Activated CD4-positive, alpha-beta T cell treated with anti-CD3 and anti-CD28 coated beads, Interleukin-2, amount 10 ng/mL, durations not matched to agents 24 days and 14 days (primary cell): ENCODE measurements at regions of chr15 and their contacts with region 1.

Region 1: GRCh38 chr15:69475769-69476358 is 23.2 kb downstream of the RPLP1 start:
- DNase-seq: peak; percentile 92
- H3K4me3 Mint-ChIP-seq: no peak overlapping the region
- H3K27ac Mint-ChIP-seq: no peak overlapping the region
- H3K4me1 Mint-ChIP-seq: peaks cover under 1% of the 10 kb centered on the region
- H3K27me3 Mint-ChIP-seq: peaks cover 26% of the 10 kb centered on the region

Region 2: GRCh38 chr15:69452692-69453521 is 23.0 kb before region 1 on chr15 and contains the start of gene RPLP1:
- intact Hi-C with region 1: no loop called
- DNase-seq: peak; percentile 99
- H3K4me3 Mint-ChIP-seq: peak within 1 kb of the TSS; percentile 99
- H3K27ac Mint-ChIP-seq: peak within 1 kb of the TSS; percentile 100
- H3K4me1 Mint-ChIP-seq: peaks cover 35% of the 10 kb centered on the region
- H3K27me3 Mint-ChIP-seq: no peaks in the 10 kb centered on the region
- total RNA-seq, gene RPLP1: 1,827 and 1,829 TPM in 2 replicates

Region 3: GRCh38 chr15:69576035-69576526 is 100.2 kb after region 1 on chr15:
- intact Hi-C with region 1: loop called (anchors 2 kb)
- DNase-seq: peak; percentile 87
- H3K4me3 Mint-ChIP-seq: no peak overlapping the region
- H3K27ac Mint-ChIP-seq: peak overlapping the region; percentile 30
- H3K4me1 Mint-ChIP-seq: peaks cover 39% of the 10 kb centered on the region
- H3K27me3 Mint-ChIP-seq: peaks cover 9% of the 10 kb centered on the region

Region 4: DNA sequence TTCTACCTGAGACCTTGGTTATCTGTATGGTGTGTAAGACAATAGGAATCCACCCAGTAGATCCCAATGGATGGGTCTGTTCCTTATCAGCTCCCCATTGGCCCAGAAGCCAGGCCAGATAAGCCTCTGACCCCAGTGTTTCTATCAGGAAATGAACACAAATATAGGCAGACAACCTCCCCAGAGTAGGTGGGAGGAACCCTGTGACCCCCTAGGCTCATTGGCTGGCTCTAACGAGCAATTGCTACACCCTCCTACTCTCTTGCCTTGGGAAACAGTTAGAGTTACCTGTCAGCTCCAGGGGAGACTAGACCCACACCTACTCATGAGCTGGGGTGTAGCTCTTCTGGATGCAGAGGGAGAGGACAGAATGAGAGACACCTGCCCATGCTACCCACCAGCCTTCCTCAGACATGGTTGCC is 987.6 kb after region 1 on chr15:
- intact Hi-C with region 1: loop called (anchors 5 kb)
- DNase-seq: no peak
- H3K4me3 Mint-ChIP-seq: no peak overlapping the region
- H3K27ac Mint-ChIP-seq: peak overlapping the region; percentile 22
- H3K4me1 Mint-ChIP-seq: peaks cover 27% of the 10 kb centered on the region
- H3K27me3 Mint-ChIP-seq: peaks cover 75% of the 10 kb centered on the region

Region 5: GRCh38 chr15:70670680-70671079 is 1194.8 kb after region 1 on chr15:
- intact Hi-C with region 1: loop called (anchors 5 kb)
- DNase-seq: no peak
- H3K4me3 Mint-ChIP-seq: no peak overlapping the region
- H3K27ac Mint-ChIP-seq: no peak overlapping the region
- H3K4me1 Mint-ChIP-seq: peaks cover 18% of the 10 kb centered on the region
- H3K27me3 Mint-ChIP-seq: peaks cover 23% of the 10 kb centered on the region

Region 6: DNA sequence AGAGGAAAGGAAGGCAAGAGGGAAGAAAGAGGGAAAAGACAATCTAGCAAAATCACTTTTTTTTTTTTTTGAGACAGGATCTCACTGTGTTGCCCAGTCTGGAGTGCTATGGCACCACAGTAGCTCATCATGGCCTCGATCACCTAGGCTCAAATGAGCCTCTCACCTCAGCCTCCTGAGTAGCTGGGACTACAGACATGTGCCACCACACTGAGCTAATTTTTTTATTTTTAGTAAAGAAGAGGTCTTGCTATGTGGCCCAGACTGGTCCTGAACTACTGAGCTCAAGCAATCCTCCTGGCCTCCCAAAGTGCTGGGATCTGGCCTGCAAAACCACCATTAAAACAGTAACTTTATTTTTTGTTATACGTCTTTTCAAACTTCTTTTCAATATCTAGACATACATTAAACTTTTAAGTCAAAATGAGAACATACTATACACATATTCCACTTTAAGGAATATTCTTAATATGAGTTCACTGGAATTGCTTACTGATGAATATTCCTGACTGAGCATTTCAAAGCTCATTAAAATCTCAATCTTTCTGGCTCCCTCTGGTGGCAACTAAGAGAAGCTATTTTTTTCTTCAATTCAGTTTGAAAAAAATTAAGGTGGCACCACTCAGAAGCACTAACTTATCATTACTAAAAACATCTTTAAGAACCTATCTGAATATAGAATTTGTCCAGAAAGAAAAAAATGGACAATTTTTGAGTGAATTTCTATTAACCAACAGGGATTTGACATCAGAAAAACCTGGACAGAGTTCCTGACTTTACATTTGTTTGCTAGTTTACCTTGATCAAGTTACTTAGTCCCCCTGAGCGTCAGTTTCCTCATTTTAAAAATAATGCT is 1246.6 kb after region 1 on chr15:
- intact Hi-C with region 1: loop called (anchors 10 kb)
- DNase-seq: no peak
- H3K4me3 Mint-ChIP-seq: no peak overlapping the region
- H3K27ac Mint-ChIP-seq: no peak overlapping the region
- H3K4me1 Mint-ChIP-seq: no peaks in the 10 kb centered on the region
- H3K27me3 Mint-ChIP-seq: peaks cover 33% of the 10 kb centered on the region

Region 7: DNA sequence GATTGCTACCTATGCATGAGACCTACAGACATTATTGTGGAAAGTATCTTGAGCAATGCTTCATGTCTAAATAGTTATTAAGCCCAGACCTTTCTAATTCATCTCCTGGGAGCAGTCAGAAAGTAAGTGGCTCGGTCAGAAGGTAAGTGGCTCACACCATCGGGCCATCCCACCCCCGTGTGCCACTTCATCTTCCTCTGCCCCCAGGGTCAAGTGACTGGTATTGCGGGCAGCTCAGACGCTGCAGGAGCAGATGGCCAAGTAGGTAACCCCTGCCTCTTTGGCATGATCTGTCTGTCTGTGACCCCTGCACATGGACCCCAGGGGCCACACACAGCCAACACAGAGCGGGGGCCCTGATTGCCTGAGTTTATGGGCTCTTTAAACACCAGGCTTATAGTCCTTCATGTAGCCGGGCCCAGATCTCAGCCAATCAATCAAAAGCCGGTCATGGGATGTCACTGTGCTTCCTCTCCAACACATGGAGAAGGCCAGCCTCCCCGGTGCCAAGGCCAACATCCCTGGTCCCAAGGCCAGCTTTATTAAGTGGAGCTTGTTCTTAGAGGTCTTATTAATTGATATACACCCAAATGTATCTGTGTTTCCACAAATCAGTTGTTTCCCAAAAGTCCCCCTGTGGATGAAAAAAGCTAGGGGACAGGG is 1335.2 kb after region 1 on chr15:
- intact Hi-C with region 1: loop called (anchors 5 kb)
- DNase-seq: no peak
- H3K4me3 Mint-ChIP-seq: no peak overlapping the region
- H3K27ac Mint-ChIP-seq: no peak overlapping the region
- H3K4me1 Mint-ChIP-seq: peaks cover 2% of the 10 kb centered on the region
- H3K27me3 Mint-ChIP-seq: peaks cover 8% of the 10 kb centered on the region